ENCODE measurements at regions of chr3 and their contacts with region 1.

Region 1: GRCh38 chr3:112561731-112562688 is at the starts of genes ATG3 and SLC35A5:
- DNase-seq: peak; percentile 99 to 100 (median 99)
- H3K4me3 ChIP-seq: peak within 1 kb of the TSS; percentile 81 to 92
- H3K4me3 Mint-ChIP-seq: peak within 1 kb of the TSS; percentile 96 to 99 (median 98)
- H3K27ac ChIP-seq: peak within 1 kb of the TSS; percentile 99
- H3K27ac Mint-ChIP-seq: peak within 1 kb of the TSS; percentile 97 to 100 (median 100)
- H3K4me1 ChIP-seq: peaks cover 44% of the 10 kb centered on the region
- H3K4me1 Mint-ChIP-seq: peaks cover 29 to 59% (median 47%) of the 10 kb centered on the region in 4 donors
- H3K27me3 ChIP-seq: no peaks in the 10 kb centered on the region
- H3K27me3 Mint-ChIP-seq: no peaks in the 10 kb centered on the region
- total RNA-seq, gene ATG3: 49.0 to 54.0 TPM
- total RNA-seq, gene SLC35A5: 25.5 to 26.6 TPM

Region 2: DNA sequence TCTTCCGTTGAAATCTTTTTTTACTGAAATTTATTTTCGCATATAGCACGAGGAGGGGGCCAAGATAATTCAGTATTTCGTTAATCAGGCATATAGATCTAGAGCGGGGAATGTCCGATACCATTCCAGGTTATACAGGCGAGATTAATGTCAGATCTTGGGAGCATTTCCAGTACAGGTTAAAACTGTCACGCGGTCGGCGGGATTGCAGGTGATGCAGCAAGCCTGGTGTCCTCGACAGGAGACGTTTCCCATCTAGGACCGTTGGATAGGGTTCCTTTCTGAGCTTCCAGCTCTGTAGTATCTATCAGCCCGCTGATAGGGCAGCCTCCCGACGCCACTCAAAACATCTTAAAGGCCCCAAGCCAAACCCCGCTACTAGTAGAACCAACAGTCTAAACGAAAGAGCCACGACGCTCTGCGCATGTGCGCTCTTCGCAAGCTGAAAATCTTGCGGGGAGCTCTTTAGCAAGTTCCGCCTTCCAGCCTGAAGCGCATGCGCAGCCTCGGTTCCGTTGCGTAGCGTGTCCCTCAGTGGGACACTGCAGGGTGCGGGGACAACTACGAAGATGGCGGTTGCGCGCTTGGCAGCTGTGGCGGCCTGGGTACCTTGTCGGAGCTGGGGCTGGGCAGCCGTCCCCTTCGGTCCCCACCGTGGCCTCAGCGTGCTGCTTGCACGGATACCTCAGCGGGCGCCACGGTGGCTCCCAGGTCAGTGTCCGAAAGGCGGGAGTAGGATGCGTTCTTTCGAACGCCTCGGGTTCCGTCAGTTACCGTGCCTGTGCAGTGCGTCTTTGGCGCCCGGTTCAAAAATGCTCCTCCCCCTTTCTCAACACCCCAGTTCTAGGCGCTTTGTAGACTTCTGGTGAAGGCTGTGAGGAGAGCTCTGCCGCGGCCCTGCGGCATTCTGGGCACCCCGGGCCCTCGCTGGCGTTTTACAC is 583.2 kb before region 1 on chr3 and contains the start of gene ABHD10:
- CTCF ChIA-PET with region 1: no interaction called
- POLR2A ChIA-PET with region 1: interaction called, 5 read pairs
- intact Hi-C with region 1: loop called (anchors 2 kb)
- DNase-seq: peak; percentile 92 to 98 (median 96)
- H3K4me3 ChIP-seq: peak within 1 kb of the TSS; percentile 90 to 95
- H3K4me3 Mint-ChIP-seq: peak within 1 kb of the TSS; percentile 92 to 97 (median 92)
- H3K27ac ChIP-seq: peak within 1 kb of the TSS; percentile 80
- H3K27ac Mint-ChIP-seq: peak within 1 kb of the TSS; percentile 91 to 97 (median 95)
- H3K4me1 ChIP-seq: peaks cover 43% of the 10 kb centered on the region
- H3K4me1 Mint-ChIP-seq: peaks cover 26 to 48% (median 35%) of the 10 kb centered on the region in 4 donors
- H3K27me3 ChIP-seq: no peaks in the 10 kb centered on the region
- H3K27me3 Mint-ChIP-seq: no peaks in the 10 kb centered on the region
- total RNA-seq, gene ABHD10: 39.7 to 40.1 TPM

Region 3: DNA sequence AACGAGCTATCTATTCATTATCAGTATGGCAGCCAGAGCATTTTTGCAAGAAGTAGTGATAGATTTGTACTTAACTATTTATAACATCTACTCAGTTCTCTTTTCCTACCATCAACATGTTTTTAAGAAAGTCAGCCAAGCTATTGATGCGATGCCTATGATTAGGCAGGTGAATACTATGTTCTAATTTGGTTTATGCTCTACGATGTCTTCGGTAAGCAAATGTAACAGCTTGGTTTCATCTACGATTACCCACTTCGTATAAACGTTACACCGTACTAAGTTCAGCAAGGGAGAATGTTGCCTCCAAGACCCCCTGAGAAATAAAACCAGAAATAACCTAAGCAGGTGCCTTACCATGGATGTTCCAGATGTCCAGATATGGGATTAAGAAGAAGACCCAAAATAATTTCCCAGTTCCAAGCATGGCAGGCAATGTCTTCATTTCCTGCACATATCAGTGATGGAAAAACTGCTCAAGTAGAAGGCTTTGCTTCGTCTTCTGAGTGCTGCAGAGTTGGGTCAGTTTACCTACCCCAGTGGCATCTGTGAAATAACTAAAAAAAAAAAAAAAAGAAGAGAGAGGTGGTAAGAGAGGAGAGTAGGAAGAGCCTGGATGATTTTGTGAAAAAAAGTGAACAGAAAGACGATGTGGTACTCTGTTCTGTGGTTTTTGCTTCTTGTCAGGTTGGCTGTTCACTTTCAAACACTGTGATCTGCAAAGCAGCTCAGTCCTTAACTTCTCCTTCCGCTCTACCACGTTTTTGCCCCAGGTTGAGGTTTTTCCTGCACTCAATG is 62.9 kb before region 1 on chr3 and contains the start of gene BTLA:
- CTCF ChIA-PET with region 1: no interaction called
- POLR2A ChIA-PET with region 1: interaction called, 11 read pairs
- intact Hi-C with region 1: loop called (anchors 2 kb)
- DNase-seq: peak; percentile 39 to 48 (median 42)
- H3K4me3 ChIP-seq: peak within 1 kb of the TSS; percentile 65 to 66
- H3K4me3 Mint-ChIP-seq: peak within 1 kb of the TSS; percentile 94 to 100 (median 97)
- H3K27ac ChIP-seq: peak within 1 kb of the TSS; percentile 57
- H3K27ac Mint-ChIP-seq: peak within 1 kb of the TSS; percentile 91 to 97 (median 95)
- H3K4me1 ChIP-seq: peaks cover 44% of the 10 kb centered on the region
- H3K4me1 Mint-ChIP-seq: peaks cover 31 to 63% (median 38%) of the 10 kb centered on the region in 4 donors
- H3K27me3 ChIP-seq: no peaks in the 10 kb centered on the region
- H3K27me3 Mint-ChIP-seq: no peaks in the 10 kb centered on the region
- total RNA-seq, gene BTLA: 22.9 to 24.9 TPM

Region 4: DNA sequence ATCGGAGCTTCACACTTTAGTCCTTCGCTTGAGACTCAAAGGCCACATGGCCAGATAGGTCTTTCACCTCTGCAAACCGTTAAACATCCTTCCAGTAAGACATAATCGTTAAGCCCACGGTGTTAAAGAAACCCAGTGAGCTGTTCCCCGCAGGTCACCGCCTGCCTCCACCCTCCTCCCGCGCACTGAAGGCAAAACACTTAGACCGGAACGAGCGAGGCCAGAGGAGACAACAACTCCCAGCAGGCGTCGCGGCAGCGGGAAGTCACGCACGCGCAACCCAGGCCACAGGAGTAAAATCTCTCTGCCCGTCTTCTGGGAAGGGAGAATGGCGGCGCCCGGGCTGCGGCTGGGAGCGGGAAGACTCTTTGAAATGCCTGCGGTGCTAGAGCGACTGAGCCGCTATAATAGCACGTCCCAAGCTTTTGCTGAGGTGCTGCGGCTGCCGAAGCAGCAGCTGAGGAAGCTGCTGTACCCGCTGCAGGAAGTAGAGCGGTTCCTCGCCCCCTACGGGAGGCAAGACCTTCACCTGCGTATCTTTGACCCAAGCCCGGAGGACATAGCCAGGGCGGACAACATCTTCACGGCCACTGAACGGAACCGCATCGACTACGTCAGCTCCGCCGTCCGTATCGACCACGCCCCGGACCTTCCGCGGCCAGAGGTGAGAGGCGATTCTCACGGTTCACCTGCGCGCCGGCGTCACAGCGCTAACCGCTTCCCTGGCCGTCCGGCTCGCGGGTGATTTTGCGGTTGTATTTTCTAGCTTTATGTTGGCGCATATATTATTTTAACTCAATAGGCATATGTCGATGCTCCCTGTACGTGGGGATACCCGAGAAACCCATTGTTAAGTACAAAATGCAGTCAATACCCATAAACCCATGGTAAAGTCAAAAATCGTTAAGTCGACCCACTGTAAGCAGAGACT is 428.9 kb after region 1 on chr3 and contains the start of gene GTPBP8:
- CTCF ChIA-PET with region 1: no interaction called
- POLR2A ChIA-PET with region 1: interaction called, 13 read pairs
- intact Hi-C with region 1: loop called (anchors 2 kb)
- DNase-seq: peak; percentile 79 to 88 (median 81)
- H3K4me3 ChIP-seq: peak within 1 kb of the TSS; percentile 73 to 91
- H3K4me3 Mint-ChIP-seq: peak within 1 kb of the TSS; percentile 95 to 98 (median 96)
- H3K27ac ChIP-seq: peak within 1 kb of the TSS; percentile 78
- H3K27ac Mint-ChIP-seq: peak within 1 kb of the TSS; percentile 94 to 98 (median 96)
- H3K4me1 ChIP-seq: peaks cover 49% of the 10 kb centered on the region
- H3K4me1 Mint-ChIP-seq: peaks cover 51 to 80% (median 62%) of the 10 kb centered on the region in 4 donors
- H3K27me3 ChIP-seq: no peaks in the 10 kb centered on the region
- H3K27me3 Mint-ChIP-seq: no peaks in the 10 kb centered on the region
- total RNA-seq, gene GTPBP8: 36.0 to 40.0 TPM

Region 5: DNA sequence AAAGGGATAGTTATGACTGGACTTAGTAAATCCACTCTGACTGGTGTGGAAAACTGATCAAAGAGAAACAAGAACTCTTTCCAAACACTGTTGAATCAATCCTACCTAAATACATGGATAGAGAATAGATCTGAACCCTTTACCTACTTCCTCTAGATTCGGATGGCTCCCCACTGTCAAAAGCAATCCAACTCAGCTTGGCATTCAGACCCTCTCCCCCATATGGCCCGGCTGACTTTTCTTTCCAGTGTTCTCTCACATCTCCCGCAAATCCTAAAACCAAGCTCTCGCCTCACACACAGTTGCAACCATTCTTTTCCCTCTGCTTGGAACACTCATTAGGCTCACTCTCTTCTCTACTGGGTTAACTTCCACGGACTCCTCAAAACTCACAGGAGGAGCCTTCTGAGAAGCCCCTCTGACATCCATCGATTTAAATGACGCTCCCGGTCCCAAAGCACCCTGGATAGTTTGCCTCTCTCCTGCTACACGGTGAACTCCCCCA is 952.3 kb after region 1 on chr3:
- CTCF ChIA-PET with region 1: no interaction called
- POLR2A ChIA-PET with region 1: no interaction called
- intact Hi-C with region 1: loop called (anchors 5 kb)
- DNase-seq: no peak
- H3K4me3 ChIP-seq: peak overlapping the region; percentile 61 to 93
- H3K4me3 Mint-ChIP-seq: no peak overlapping the region
- H3K27ac ChIP-seq: peak overlapping the region; percentile 74
- H3K27ac Mint-ChIP-seq: no peak overlapping the region
- H3K4me1 ChIP-seq: peaks cover 19% of the 10 kb centered on the region
- H3K4me1 Mint-ChIP-seq: peaks cover 6 to 24% (median 9%) of the 10 kb centered on the region in 4 donors
- H3K27me3 ChIP-seq: peaks cover 4% of the 10 kb centered on the region
- H3K27me3 Mint-ChIP-seq: peaks cover 3 to 8% of the 10 kb centered on the region in 2 donors

Region 6: DNA sequence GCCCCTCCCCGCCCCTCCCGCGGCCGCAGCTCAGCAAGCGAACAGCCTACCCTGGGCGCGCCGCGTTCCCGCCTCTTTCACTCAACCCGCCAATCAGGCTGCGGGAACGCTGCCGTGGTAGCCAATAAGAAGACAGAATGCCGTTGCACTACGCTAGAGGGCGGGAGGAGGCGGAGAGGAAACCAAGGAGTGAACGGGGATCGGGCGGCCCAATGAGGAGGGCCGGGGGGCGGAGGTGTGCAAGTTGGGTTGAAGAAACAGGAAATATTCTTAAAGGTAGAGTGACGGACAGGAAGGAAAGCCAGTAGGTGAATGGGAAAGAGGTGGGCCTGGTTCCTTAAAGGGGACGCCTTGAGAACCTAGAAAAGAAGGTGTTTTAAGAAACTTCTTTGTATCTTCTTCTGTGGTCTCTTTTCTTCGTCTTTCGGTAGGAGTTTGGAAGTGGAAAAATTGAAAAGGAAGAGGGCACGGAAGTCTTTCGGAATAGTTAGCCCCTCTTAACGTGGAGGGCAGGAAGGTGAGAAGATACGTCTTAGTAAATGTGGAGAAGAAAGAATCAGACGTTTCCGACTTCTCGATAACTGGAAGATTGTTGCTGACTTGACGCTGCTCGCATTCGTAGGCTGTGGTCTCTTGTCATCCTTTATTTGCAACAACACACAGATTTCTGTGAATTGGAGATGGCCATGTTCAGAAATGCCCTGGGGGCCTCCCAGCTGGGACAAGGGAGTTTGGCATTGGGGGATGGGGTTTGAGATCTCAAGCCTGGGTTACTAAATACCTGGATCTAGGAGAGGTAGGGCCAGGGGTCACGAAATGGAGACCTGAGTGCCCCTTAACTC is 1134.9 kb after region 1 on chr3:
- CTCF ChIA-PET with region 1: no interaction called
- POLR2A ChIA-PET with region 1: interaction called, 3 read pairs
- intact Hi-C with region 1: loop called (anchors 2 kb)
- DNase-seq: peak; percentile 99 to 100 (median 100)
- H3K4me3 ChIP-seq: peak overlapping the region; percentile 74 to 90
- H3K4me3 Mint-ChIP-seq: no peak overlapping the region
- H3K27ac ChIP-seq: peak overlapping the region; percentile 86
- H3K27ac Mint-ChIP-seq: no peak overlapping the region
- H3K4me1 ChIP-seq: peaks cover 46% of the 10 kb centered on the region
- H3K4me1 Mint-ChIP-seq: peaks cover 20 to 33% (median 25%) of the 10 kb centered on the region in 4 donors
- H3K27me3 ChIP-seq: no peaks in the 10 kb centered on the region
- H3K27me3 Mint-ChIP-seq: no peaks in the 10 kb centered on the region

Measured in CD4-positive, alpha-beta memory T cell (primary cell).